ENCODE measurements at regions of chr16 and their contacts with region 1.

Region 1: DNA sequence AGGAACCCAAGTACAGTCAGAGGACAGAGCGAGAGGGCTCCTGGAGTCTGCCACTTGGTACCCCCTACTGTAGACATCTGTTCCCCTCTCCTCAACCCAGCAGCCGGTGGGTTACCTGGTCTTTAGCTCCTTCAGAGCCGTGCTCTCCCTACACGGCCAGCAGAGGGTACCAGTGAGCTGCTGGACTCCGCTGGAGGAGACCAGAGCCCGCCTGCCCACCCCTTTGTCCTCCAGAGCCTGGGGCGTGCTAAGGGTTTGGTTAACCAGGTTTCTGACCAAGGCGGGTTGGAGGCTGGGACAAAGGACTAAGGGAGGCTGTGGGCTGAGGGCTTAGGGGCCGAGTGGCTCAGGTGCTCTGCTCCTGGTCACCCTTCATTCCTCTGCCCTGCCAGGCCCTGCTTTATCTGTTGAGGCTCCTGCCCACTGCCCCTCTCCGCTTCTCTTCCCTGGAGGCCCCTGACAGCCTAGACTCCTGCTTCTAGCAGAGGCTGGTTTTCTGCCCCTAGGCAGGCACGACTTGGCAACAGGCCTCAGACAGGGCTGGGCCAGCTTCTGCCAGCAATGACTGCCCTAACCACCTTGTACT is 2.7 kb upstream of the HSD11B2 start:
- DNase-seq: no peak
- H3K4me3 ChIP-seq: no peak overlapping the region
- CTCF ChIP-seq: peak; percentile 92

Region 2: DNA sequence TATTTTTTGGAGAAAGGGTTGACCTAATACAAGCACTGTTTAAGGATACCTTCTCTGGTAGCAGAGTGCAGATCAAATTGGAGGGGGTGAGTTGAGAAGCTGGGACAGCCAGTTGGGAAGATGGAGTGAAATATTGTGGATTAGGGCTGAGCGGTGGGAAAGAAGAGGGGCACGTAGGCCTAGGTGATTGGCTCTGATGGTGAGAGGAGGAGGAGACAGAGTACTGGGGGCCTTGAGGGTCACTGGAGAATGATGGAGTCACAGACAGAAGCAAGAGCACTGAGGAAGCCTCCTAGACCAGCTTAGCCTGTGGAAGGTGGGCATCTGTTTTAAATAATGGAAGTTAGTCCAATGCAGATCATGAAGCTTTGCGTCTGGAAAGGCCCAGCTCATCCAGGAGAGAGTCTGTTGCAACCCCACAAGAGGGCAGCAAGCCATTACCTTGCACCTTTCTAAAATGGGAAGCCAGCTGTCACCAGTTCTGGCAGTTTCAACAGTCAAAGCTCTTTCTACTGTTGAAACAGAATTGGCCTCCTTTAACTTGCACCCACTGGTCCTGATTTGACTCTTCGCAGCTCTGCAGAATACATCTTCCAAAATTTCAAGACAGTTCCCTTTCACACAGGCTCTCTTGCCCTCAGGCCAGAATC is 167.7 kb before region 1 on chr16:
- CTCF ChIA-PET with region 1: interaction called, 48 read pairs
- POLR2A ChIA-PET with region 1: no interaction called
- DNase-seq: peak; percentile 19
- H3K4me3 ChIP-seq: no peak overlapping the region
- CTCF ChIP-seq: peak; percentile 77

Region 3: DNA sequence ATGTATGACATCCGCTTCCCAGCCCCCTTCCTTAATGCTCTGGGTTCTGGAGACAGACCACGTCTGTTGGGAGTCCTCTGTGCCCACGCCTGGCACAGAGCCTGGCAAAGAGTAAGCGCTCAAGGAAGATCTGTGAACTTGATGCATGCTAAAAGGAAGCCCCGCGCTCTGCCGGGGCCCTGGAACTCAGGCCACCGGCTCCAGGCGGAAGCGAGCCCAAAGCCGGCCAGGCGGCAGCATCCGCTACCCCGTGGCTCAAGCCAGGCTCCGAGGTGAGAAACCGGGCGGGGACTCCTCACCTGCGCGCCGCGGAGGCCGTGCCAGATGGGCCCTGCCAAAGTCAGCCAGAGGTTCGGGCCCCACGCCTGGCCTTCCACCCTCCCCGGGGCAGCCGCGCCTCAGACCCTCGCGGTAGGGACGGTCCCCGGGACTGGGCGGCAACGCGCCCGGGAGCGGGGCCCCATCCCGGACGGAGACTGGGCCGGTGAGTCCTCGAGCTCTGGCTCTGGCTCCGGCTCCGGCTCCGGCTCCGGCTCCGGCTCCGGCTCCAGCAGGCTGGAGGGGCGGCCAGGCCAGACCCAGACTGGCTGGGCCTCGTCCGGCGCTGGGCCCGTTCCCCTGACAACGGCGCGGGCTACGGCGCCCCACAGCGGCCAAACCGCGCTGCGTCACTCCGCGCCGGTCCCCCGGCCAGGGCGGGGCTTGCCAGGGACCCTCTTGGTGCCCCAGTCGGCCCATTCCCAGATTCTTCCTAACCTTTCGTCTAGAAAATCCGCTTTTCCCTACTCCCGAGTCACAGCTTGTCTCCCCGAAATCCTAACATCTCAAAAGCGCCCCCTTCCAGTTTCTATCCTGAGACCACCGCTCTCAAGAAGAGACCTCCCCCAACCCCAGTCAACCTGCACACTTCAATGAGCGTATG is 12.1 kb before region 1 on chr16 and contains the start of gene ZDHHC1:
- CTCF ChIA-PET with region 1: interaction called, 79 read pairs
- POLR2A ChIA-PET with region 1: no interaction called
- DNase-seq: no peak
- H3K4me3 ChIP-seq: peak within 1 kb of the TSS; percentile 73
- CTCF ChIP-seq: peak; percentile 69

Region 4: GRCh38 chr16:67447508-67448076 is 19.4 kb after region 1 on chr16:
- CTCF ChIA-PET with region 1: interaction called, 75 read pairs
- POLR2A ChIA-PET with region 1: no interaction called
- DNase-seq: no peak
- H3K4me3 ChIP-seq: no peak overlapping the region
- CTCF ChIP-seq: peak; percentile 34

Region 5: GRCh38 chr16:67461600-67462592 is 33.7 kb after region 1 on chr16:
- CTCF ChIA-PET with region 1: interaction called, 154 read pairs
- POLR2A ChIA-PET with region 1: no interaction called
- DNase-seq: no peak
- H3K4me3 ChIP-seq: no peak overlapping the region
- CTCF ChIP-seq: no peak

Region 6: DNA sequence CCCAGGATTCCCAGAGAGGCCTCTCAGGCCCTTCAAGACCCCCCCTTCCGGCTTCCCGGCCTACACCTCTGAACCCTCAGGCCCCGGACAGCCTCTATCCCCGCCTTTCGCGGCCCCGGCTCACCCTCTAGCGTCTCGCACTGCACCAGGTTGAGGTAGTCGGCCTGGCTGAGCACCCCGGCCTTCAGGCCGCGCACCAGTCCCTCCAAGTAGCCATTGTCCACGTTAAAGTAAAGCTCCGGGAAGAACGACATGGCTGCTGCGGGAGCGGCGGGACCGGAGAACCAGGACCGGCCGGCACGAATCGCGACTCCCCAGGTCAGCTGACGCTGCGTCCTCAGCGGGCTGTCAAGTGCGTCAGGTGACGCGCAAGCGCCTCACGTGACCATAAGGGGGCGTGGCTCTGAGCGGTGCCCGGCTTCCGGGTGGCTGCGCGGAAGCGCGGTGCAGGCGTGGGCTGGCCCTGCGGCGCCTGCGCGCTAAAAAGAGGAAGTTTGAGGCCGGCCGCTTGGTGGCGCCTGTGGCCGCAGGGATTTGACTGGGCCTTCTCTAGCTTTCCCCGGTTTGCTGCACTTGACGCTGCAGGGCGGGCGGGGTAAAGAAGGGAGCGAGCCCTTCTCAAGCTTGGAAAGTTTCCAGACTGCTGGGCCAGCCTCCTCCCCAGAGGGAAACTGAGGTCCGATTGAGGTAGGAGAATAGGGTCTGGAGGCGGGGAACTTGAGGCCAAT is 52.8 kb after region 1 on chr16 and contains the start of gene ATP6V0D1:
- CTCF ChIA-PET with region 1: interaction called, 15 read pairs
- POLR2A ChIA-PET with region 1: no interaction called
- DNase-seq: peak; percentile 76
- H3K4me3 ChIP-seq: peak within 1 kb of the TSS; percentile 98
- CTCF ChIP-seq: peak; percentile 90